ENCODE measurements at regions of chr1 and their contacts with region 1.

Region 1: DNA sequence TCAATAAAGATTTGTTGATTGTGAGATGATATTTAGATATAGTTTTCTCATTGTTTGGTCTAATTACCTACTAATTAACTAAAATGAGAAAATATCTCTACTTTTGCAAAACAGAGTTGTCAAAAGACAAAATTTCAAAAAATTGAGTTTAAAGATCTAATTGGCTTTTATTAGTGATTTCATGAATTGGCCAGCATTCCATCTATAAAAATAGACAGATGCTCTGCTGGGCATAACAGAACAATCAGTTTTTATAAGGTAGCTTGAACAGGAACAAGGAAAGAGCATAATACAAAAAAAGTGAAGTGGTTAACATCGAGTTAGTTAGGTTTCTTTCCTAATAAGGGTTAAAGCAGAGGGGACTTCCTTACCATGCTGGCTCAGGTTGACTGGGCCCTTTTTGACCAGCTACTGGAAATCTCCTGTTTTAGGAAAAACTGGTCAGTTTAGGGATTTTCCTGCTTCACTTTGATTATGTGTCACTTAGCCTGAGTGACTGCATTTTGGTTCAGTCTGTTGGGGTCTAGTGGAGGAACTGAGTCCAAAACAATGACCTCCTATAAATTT is 63.0 kb downstream of the VCAM1 start:
- DNase-seq: no peak
- H3K4me3 ChIP-seq: no peak overlapping the region
- H3K27ac ChIP-seq: no peak overlapping the region
- H3K4me1 ChIP-seq: no peaks in the 10 kb centered on the region
- H3K27me3 ChIP-seq: no peaks in the 10 kb centered on the region
- CTCF ChIP-seq: no peak

Region 2: GRCh38 chr1:100760511-100760910 is 22.0 kb before region 1 on chr1:
- intact Hi-C with region 1: loop called (anchors 2 kb)
- DNase-seq: no peak
- H3K4me3 ChIP-seq: no peak overlapping the region
- H3K27ac ChIP-seq: no peak overlapping the region
- H3K4me1 ChIP-seq: no peaks in the 10 kb centered on the region
- H3K27me3 ChIP-seq: no peaks in the 10 kb centered on the region
- CTCF ChIP-seq: no peak